ENCODE measurements at regions of chr10 and their contacts with region 1.

Region 1: DNA sequence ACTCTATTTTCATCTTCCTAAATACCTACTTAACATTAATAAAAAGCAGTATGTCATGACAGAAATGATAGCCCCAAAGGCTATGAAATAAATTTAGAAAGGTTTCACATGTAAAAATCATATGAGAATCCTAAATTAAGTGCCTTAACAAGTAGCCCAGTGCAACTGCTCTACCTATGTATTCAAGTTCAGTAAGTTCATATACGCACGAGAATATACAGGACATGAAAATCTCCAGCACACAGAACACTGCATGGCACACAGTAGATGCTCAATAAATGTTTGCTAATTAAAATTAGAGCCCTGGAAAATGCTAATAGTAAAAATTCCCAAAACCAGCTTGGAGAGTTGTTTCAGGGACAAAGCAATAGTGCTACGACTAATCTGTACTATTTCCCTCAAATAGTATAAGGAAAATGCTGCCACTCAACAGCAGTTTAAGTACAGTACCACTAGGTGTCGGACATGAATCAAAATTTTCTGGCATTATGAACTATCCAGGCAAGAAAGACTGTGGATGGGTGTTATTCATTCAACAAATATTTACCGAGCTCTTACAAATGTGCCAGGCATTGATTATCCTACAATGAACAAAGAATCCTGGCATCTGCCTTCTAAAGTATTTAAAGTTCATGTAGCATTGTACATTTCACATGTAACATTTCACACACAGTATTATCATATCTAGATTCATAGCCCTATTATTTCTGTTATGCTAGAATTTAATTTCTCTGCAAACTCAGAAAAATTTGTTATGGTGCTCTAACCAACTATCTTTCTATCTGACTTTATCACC is 80.9 kb downstream of the ARHGAP21 start:
- DNase-seq: peak; percentile 73
- H3K4me3 ChIP-seq: no peak overlapping the region
- H3K27ac ChIP-seq: no peak overlapping the region
- H3K4me1 ChIP-seq: peaks cover 10% of the 10 kb centered on the region
- H3K27me3 ChIP-seq: no peaks in the 10 kb centered on the region
- CTCF ChIP-seq: peak; percentile 76 to 81

Region 2: GRCh38 chr10:24706479-24707118 is 63.8 kb after region 1 on chr10:
- CTCF ChIA-PET with region 1: no interaction called
- dilution Hi-C with region 1: no loop called
- in situ Hi-C with region 1: no loop called
- intact Hi-C with region 1: loop called (anchors 5 kb)
- DNase-seq: peak; percentile 94
- H3K4me3 ChIP-seq: no peak overlapping the region
- H3K27ac ChIP-seq: peak overlapping the region; percentile 47
- H3K4me1 ChIP-seq: peaks cover 26% of the 10 kb centered on the region
- H3K27me3 ChIP-seq: no peaks in the 10 kb centered on the region
- CTCF ChIP-seq: no peak

Region 3: DNA sequence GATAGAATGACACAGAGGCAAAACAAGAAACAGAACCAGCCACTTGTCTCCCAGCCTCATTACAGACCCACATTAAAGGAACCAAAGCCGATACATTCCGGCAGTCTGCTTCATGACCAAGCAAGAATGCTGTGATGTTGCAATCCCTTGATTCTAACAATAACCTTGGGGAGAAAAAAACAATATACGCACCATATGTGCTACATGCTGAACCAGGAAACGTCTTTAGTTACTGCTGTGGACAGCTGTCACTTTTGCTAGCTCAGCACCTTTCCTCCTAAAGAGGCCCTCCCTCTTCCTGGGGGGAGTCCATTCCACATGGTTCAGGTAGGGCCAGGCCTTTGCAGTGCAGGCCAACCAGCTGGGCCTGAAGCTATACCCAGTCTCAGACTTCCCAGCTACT is 230.5 kb after region 1 on chr10:
- CTCF ChIA-PET with region 1: no interaction called
- dilution Hi-C with region 1: no loop called
- in situ Hi-C with region 1: no loop called
- intact Hi-C with region 1: loop called (anchors 5 kb)
- DNase-seq: peak; percentile 84
- H3K4me3 ChIP-seq: no peak overlapping the region
- H3K27ac ChIP-seq: no peak overlapping the region
- H3K4me1 ChIP-seq: peaks cover 18% of the 10 kb centered on the region
- H3K27me3 ChIP-seq: no peaks in the 10 kb centered on the region
- CTCF ChIP-seq: no peak

Region 4: DNA sequence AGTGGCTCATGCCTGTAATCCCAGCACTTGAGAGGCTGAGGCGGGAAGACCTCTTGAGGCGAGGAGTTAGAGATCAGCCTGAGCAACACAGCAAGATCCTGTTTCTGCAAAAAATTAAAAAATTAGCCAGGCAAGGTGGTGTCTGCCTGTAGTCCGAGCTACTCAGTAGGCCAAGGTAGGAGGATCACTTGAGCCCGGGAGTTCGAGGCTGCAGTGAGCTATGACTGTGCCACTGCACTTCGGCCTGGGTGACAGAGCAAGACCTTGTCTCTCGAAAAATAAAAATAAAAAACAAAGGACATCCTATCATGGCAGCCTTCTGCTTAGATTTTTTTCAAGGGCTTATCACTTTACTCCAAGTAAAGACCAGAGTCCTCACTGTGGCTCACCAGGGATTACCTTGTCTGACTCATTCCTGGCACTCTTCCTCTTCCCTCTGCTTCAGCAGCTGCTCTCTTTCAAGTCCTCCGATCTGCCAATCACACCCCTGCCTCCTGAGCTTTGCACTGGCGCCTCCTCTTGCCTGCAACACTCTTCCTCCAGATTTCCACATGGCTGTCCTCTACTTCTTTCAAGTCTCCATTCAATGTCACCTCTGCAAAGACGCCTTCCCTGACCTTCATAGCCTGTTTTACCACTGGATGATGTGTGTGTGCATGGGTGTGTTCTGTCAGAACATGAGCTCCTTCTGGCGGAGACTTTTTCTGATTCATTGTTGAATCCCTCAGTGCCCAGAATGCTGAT is 301.9 kb after region 1 on chr10:
- CTCF ChIA-PET with region 1: interaction called, 4 read pairs
- dilution Hi-C with region 1: no loop called
- in situ Hi-C with region 1: no loop called
- intact Hi-C with region 1: loop called (anchors 1 kb)
- DNase-seq: peak; percentile 86
- H3K4me3 ChIP-seq: no peak overlapping the region
- H3K27ac ChIP-seq: no peak overlapping the region
- H3K4me1 ChIP-seq: peaks cover 23% of the 10 kb centered on the region
- H3K27me3 ChIP-seq: no peaks in the 10 kb centered on the region
- CTCF ChIP-seq: peak; percentile 16 to 44

Region 5: DNA sequence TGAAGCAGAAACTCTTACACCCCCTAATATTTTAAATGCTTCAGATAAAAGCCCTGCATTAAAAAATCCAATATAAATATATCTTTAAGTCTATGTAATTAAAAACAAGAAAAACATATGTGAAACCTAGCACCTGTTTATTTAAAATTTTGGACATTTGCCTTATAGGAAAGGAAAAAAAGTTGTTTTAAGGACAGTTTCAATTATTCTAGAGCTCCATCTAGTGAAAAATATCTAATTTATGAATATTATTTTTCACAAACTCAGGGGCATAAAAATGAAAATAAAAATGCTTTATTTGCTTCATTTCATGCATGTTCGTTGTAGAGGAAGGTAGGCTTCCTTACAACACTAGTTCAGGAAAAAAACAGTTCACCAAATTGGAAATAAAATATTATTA is 347.0 kb after region 1 on chr10:
- CTCF ChIA-PET with region 1: interaction called, 11 read pairs
- dilution Hi-C with region 1: no loop called
- in situ Hi-C with region 1: loop called (anchors 10 kb)
- intact Hi-C with region 1: loop called (anchors 1 kb)
- DNase-seq: no peak
- H3K4me3 ChIP-seq: no peak overlapping the region
- H3K27ac ChIP-seq: no peak overlapping the region
- H3K4me1 ChIP-seq: no peaks in the 10 kb centered on the region
- H3K27me3 ChIP-seq: no peaks in the 10 kb centered on the region
- CTCF ChIP-seq: no peak

Region 6: DNA sequence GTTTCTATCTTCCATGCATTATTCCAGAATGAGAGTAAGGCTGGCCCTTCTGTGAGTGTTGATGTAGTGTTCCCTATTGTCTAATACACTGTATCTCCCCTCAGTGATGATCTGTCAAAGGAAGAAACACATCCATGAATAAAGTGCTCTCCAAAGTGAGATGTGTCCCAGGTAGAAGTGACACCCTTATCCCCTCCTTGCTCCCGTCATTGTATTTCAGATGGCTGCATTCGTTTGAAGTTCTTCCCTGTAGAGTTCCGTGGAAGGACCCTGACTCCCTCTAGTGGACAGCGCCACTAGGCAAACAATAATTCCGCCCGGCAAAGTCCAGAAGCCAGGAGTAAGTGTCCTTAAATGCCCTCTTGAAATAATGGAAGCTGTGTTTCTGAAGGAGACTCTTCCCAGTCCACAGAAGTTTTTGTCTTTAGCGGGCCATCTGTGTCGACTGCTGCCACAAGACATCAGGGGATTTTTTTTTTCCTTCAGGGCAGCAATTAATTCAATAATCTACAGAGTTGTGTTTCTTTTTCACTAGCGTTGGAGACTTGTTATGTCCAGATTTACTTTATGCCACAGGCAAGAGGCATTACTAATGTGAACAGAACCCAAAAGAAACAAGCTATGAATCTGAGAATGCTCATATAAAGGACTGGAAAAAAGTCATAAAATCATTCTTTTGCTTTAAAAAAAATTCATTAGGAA is 438.2 kb after region 1 on chr10:
- CTCF ChIA-PET with region 1: no interaction called
- dilution Hi-C with region 1: no loop called
- in situ Hi-C with region 1: no loop called
- intact Hi-C with region 1: loop called (anchors 1 kb)
- DNase-seq: peak; percentile 72
- H3K4me3 ChIP-seq: no peak overlapping the region
- H3K27ac ChIP-seq: no peak overlapping the region
- H3K4me1 ChIP-seq: no peaks in the 10 kb centered on the region
- H3K27me3 ChIP-seq: no peaks in the 10 kb centered on the region
- CTCF ChIP-seq: peak; percentile 87 to 95

Measured in mammary epithelial cell (primary cell).